Aorta (tissue), 5 donors: ENCODE measurements at regions of chr5 and their contacts with region 1.

Region 1: GRCh38 chr5:180328296-180329137 is 24.6 kb downstream of the GFPT2 start:
- DNase-seq: peak; percentile 88 to 94
- ATAC-seq: peak; percentile 53
- H3K4me3 ChIP-seq: no peak overlapping the region
- H3K27ac ChIP-seq: no peak overlapping the region
- H3K4me1 ChIP-seq: no peaks in the 10 kb centered on the region
- H3K27me3 ChIP-seq: no peaks in the 10 kb centered on the region

Region 2: GRCh38 chr5:180130876-180131740 is 197.4 kb before region 1 on chr5:
- intact Hi-C with region 1: loop called in 1 of 2 experiments (anchors 5 kb)
- DNase-seq: peak in 1 of 2 donors; percentile 67
- ATAC-seq: no peak
- H3K4me3 ChIP-seq: no peak overlapping the region
- H3K27ac ChIP-seq: no peak overlapping the region
- H3K4me1 ChIP-seq: no peaks in the 10 kb centered on the region
- H3K27me3 ChIP-seq: no peaks in the 10 kb centered on the region

Region 3: GRCh38 chr5:180343831-180344327 is 15.4 kb after region 1 on chr5:
- intact Hi-C with region 1: no loop called
- DNase-seq: peak; percentile 44 to 69
- ATAC-seq: peak; percentile 20
- H3K4me3 ChIP-seq: no peak overlapping the region
- H3K27ac ChIP-seq: no peak overlapping the region
- H3K4me1 ChIP-seq: no peaks in the 10 kb centered on the region
- H3K27me3 ChIP-seq: no peaks in the 10 kb centered on the region